Ascending aorta (tissue), 2 donors: ENCODE measurements at regions of chr12 and their contacts with region 1.

Region 1: DNA sequence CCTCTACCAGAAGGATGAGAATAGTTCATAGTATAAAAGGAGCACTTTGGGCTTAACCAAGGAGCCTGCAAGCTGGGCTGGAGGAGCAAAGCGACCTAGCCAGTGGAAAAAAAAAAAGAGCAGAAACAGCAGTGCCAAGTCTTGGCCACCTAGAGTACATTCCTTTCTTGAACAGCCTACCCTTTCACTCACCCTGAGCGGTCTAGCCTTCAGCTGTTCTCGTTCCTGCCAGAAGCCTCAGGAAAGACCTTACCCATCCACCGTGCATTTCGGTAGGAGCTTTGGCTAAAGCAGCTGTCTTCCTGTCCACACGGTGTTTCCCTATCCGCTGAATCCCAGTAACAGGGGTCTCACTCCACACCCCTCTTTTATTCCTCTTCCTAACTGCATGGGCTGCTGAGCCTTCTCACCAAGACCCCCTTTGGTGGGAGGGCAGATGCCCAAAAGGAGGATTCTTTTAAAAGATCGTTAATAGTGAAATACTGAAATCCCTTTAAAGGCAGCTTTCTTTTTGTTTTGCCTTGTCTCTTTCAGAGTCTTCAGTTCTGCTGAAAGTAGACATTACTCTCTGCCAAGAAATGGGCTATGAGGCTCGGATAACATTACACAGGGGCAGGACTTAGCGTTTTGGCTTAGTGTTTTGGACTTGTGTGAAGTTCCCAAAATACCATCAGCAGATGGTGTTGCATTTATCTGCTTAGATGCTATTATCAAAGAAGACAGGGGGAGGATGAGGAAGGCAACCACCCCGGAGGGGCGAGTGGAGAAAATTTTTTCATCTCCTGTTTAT is 88.5 kb upstream of the METAP2 start:
- DNase-seq: peak in 1 of 2 donors; percentile 69
- H3K4me3 ChIP-seq: peak overlapping the region; percentile 55 to 58
- H3K27ac ChIP-seq: peak overlapping the region; percentile 82 to 90
- H3K4me1 ChIP-seq: peaks cover 5 to 25% of the 10 kb centered on the region in 2 donors
- H3K27me3 ChIP-seq: no peaks in the 10 kb centered on the region
- CTCF ChIP-seq: no peak

Region 2: DNA sequence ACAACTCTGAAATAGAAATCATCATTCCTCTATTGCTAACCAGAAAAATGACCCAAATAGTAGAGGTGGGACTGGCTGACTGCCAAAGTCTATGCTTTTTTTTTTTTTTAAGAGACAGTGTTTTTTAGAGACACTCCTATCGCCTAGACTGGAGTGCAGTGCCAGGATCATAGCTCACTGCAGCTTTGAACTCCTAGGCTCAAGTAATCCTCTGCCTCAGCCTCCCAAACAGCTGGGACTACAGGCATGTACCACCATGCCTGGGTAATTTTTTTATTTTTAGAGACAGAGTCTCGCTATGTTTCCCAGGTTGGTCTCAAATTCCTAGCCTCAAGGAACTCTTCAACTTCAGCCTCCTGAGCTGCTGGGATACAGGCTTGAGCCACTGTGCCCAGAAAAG is 331.2 kb before region 1 on chr12:
- intact Hi-C with region 1: no loop called
- DNase-seq: no peak
- H3K4me3 ChIP-seq: no peak overlapping the region
- H3K27ac ChIP-seq: no peak overlapping the region
- H3K4me1 ChIP-seq: no peaks in the 10 kb centered on the region
- H3K27me3 ChIP-seq: no peaks in the 10 kb centered on the region
- CTCF ChIP-seq: no peak

Region 3: DNA sequence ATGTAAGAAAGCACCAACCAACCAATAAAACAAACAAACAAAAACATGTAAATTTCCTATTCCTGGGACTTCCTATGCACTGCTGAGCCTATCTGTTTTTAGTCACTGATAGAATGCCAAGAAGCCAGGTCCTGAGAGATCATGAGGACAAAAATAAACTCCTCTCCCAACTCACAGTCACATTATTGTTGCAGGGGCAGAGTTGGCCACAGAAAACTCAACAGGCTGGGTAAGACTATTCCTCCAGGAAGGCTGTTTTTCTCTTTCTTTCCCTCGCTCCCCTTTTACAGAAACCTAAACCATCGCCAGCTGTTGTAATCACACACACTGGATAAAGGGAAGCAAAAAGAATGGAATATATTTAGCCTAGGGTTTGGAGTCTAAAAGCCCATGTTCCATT is 32.7 kb after region 1 on chr12:
- intact Hi-C with region 1: loop called (anchors 2 kb)
- DNase-seq: peak in 1 of 2 donors; percentile 65
- H3K4me3 ChIP-seq: peak overlapping the region in 1 of 2 donors; percentile 38
- H3K27ac ChIP-seq: peak overlapping the region; percentile 76 to 89
- H3K4me1 ChIP-seq: peaks cover 5 to 17% of the 10 kb centered on the region in 2 donors
- H3K27me3 ChIP-seq: no peaks in the 10 kb centered on the region
- CTCF ChIP-seq: no peak